AG04450 (cell line): ENCODE measurements at regions of chr7 and their contacts with region 1.

Region 1: GRCh38 chr7:90346336-90347125 is at the start of gene GTPBP10:
- DNase-seq: peak; percentile 90
- H3K4me3 ChIP-seq: peak within 1 kb of the TSS; percentile 92
- H3K27ac ChIP-seq: peak within 1 kb of the TSS; percentile 77
- H3K27me3 ChIP-seq: no peaks in the 10 kb centered on the region
- CTCF ChIP-seq: peak; percentile 75
- polyA plus RNA-seq, gene GTPBP10: 15.8 and 30.0 TPM in 2 replicates

Region 2: GRCh38 chr7:89800761-89801160 is 545.8 kb before region 1 on chr7:
- CTCF ChIA-PET with region 1: no interaction called
- POLR2A ChIA-PET with region 1: no interaction called
- DNase-seq: no peak
- H3K4me3 ChIP-seq: no peak overlapping the region
- H3K27ac ChIP-seq: no peak overlapping the region
- H3K27me3 ChIP-seq: no peaks in the 10 kb centered on the region
- CTCF ChIP-seq: no peak

Region 3: GRCh38 chr7:90403174-90404113 is 56.9 kb after region 1 on chr7 and contains the start of gene CLDN12:
- CTCF ChIA-PET with region 1: interaction called, 12 read pairs
- POLR2A ChIA-PET with region 1: interaction called, 4 read pairs
- DNase-seq: peak; percentile 92
- H3K4me3 ChIP-seq: peak within 1 kb of the TSS; percentile 85
- H3K27ac ChIP-seq: peak within 1 kb of the TSS; percentile 97
- H3K27me3 ChIP-seq: no peaks in the 10 kb centered on the region
- CTCF ChIP-seq: no peak
- polyA plus RNA-seq, gene CLDN12: 41.4 and 41.6 TPM in 2 replicates

Region 4: DNA sequence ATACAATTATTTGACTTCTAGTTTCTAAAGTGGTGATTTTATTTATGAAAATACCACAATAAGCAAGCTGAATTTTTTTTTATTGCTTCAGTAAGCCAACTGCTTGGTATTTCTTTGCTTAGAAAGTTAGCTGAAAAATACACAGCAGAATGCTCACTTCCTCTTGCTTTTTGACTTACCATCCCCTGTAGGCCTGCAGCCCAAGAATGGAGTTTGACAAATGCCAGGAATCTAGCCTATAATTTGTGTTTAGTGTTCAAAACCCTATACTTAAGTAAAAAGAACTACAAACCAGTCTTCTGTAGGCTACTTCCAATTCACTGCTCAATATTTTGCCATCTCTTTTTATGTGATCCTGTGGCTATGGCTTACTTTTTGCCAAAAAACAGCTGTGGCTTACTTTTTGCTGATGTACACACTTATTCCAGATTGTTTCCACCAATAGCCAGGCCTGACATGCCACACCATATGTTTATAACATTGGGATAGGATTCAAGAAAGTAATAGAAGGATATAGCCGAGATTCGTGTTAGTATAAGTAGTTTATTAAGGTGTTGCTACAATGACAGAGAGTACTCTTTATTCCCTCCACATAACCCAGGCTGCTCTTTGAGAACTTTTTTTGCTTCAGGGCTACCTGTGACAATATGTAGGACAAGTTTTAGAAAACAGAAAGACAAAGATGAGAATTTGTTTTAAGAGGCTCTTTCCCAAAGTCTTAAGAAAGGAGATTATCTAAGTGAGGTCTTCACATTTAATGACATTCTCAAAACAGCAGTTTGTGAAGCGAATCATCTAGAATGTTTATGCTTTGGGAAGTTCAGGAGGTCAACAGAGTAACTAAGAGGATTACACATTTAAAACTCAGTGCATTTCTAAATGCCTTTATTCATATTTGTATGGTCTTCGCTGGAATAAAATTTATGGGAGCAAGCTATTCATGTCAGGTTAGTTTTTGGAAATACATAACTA is 653.8 kb after region 1 on chr7:
- CTCF ChIA-PET with region 1: no interaction called
- POLR2A ChIA-PET with region 1: no interaction called
- DNase-seq: peak; percentile 7
- H3K4me3 ChIP-seq: no peak overlapping the region
- H3K27ac ChIP-seq: no peak overlapping the region
- H3K27me3 ChIP-seq: no peaks in the 10 kb centered on the region
- CTCF ChIP-seq: no peak